ENCODE measurements at regions of chr1 and their contacts with region 1.

Region 1: DNA sequence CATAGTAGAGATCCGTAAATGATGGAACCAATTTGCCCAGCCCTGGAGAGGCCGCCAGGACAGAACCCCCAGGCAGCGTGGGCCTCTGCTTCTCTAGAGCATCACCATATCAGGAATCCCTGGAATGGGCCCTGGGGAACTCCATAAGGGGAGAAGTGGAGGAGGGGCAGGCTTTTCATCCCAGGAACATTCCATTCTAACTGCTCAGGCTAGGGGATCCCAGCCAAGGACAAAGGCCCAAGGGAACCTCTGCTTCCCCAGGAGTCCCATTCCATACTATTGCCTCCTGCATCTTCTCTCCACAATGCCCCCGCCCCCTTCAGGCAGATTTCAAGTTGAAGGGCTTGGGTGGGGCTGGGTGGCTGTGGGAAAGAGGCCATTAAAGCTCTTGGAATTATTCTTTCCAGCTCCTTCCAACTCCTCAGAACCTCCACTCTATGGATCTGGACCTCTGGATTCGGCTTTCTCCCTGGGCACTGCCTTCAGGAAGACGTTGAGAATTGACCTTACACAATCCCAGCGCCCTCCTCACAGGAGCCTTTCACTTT is 6.0 kb downstream of the TRNP1 start:
- DNase-seq: peak; percentile 98
- ATAC-seq: peak; percentile 70
- H3K4me3 ChIP-seq: no peak overlapping the region
- H3K27ac ChIP-seq: peak overlapping the region; percentile 88
- H3K4me1 ChIP-seq: peaks cover 51% of the 10 kb centered on the region
- H3K27me3 ChIP-seq: no peaks in the 10 kb centered on the region
- CTCF ChIP-seq: no peak
- POLR2A ChIP-seq: no peak; the same call in 1 of the 2 replicates
- RAD21 ChIP-seq: no peak; the same call in 1 of the 2 replicates

Region 2: DNA sequence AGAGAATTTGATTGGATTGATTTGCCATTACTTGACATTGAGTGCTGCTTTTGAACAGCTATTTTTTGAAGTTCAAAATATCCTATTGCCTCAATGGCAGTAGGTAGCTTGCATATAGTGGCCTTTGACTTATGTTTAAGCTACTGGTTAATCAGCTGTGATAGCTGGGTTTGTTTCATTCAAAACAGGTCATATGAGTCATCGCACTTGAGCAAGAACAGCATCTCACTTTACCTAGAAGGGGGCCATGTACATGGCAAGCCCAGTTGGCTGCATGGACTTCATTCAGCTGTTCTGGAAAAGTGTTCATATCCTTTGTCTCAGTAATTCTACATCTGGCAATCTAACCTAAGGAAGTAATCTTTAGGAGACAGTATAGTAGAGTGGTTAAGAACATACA is 332.7 kb before region 1 on chr1:
- CTCF ChIA-PET with region 1: no interaction called
- POLR2A ChIA-PET with region 1: no interaction called
- dilution Hi-C with region 1: no loop called
- in situ Hi-C with region 1: no loop called
- intact Hi-C with region 1: no loop called
- DNase-seq: peak; percentile 62
- ATAC-seq: peak; percentile 48
- H3K4me3 ChIP-seq: no peak overlapping the region
- H3K27ac ChIP-seq: no peak overlapping the region
- H3K4me1 ChIP-seq: peaks cover 2% of the 10 kb centered on the region; the same call in 1 of the 2 replicates
- H3K27me3 ChIP-seq: peaks cover 2% of the 10 kb centered on the region
- CTCF ChIP-seq: no peak
- POLR2A ChIP-seq: no peak
- RAD21 ChIP-seq: no peak

Region 3: DNA sequence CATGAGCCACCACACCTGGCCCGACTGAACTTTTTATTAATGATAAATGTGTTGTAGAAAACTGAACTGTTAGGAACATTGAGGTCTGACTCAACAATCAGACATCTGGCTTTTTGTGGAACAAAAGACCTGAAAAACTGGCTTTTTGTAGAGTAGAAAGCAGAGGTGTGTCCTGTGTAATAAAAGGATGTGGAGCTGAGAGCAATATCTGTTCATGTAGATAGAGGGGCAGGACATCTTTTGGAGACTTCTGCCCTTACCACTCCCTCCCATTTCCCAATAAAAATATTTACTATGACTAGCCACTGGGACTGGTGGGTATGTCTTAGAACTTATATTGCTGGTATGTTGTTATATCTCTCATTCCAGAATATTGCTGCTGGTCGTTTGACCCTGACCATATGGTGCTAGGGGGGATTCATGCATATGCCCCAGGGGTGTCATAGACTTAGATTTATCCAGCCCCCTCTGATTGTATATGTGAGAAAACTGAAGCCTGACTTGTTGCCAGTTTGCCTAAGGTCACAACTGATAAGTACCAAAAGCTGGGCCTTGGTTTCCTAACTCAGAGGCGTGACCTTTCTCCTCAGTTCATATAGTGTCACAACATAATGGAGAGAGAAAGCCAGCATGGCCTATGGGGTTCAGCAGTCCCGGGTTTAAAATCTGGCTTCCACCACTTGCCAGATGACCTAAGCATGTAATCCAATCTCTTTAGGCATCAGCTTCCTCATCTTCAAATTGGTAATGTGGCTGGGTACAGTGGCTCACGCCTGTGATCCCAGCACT is 245.2 kb before region 1 on chr1:
- CTCF ChIA-PET with region 1: no interaction called
- POLR2A ChIA-PET with region 1: no interaction called
- dilution Hi-C with region 1: no loop called
- in situ Hi-C with region 1: no loop called
- intact Hi-C with region 1: no loop called
- DNase-seq: no peak
- ATAC-seq: no peak; the same call in none of the 2 replicates
- H3K4me3 ChIP-seq: no peak overlapping the region
- H3K27ac ChIP-seq: no peak overlapping the region
- H3K4me1 ChIP-seq: peaks cover 3% of the 10 kb centered on the region
- H3K27me3 ChIP-seq: no peaks in the 10 kb centered on the region
- CTCF ChIP-seq: no peak
- POLR2A ChIP-seq: no peak
- RAD21 ChIP-seq: no peak

Region 4: DNA sequence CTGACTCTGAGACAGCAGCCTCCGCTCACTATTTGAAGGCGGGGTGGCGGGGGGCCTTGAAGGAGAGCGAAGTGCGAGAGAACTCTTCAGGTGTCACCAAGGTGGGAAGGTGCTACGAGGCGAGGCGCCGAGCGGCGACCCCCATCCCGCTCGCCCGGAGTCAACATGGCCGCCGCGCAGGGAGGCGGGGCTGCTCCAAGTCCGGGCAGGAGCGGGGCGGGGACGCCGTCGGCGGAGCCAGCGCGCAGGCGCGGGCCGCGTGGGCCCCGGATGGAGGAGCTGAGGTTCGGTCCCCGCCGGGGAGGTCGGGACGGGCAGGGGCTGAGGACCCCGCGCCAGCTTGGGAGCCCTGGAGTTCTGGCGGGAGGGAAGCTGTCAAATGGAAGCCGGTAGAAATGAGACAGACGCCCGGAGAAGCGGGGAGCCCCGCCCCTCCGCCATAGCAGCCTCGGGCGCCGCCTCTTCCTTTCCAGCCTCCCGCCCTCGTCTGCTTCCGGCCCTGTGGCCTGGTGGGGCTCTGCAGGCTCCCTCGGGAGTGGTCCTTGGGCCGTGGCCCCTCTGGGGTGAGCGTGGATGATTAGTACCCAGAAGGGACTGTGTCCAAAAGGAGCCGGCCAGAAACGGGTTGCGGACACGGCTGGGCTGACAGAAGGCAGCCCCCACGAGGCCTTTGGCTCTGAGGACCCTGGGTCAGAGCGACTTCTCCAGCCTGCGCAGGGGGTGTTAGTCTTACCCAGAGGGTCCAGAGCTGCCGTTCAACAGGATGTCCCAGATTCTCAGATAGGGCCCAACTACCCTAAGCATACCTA is 211.6 kb before region 1 on chr1 and contains the start of gene PIGV:
- CTCF ChIA-PET with region 1: no interaction called
- POLR2A ChIA-PET with region 1: no interaction called
- dilution Hi-C with region 1: no loop called
- in situ Hi-C with region 1: no loop called
- intact Hi-C with region 1: no loop called
- DNase-seq: peak; percentile 75
- ATAC-seq: peak; percentile 77
- H3K4me3 ChIP-seq: peak within 1 kb of the TSS; percentile 72
- H3K27ac ChIP-seq: peak within 1 kb of the TSS; percentile 95
- H3K4me1 ChIP-seq: peaks cover 31% of the 10 kb centered on the region
- H3K27me3 ChIP-seq: no peaks in the 10 kb centered on the region
- CTCF ChIP-seq: no peak
- POLR2A ChIP-seq: peak; percentile 66; the same call in 1 of the 2 replicates
- RAD21 ChIP-seq: 0 out of 2 replicates have a peak, but pooled peaks have one; percentile 4
- total RNA-seq, gene PIGV: 8.6 and 10.6 TPM in 2 replicates

Region 5: DNA sequence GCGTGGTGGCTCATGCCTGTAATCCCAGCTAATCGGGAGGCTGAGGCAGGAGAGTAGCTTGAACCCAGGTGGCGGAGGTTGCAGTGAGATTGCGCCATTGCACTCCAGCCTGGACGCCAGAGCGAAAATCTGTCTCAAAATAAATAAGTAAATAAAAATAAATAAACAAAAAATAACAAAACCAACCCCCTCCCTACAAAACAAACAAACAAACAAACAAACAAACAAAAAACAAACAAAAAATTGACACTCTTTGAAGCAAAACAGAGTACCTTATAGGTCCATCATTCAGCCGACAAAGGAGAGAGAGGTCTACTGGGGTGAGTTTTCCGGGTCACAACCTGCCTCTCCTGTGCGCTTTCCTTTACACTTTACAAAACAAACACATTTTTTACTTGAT is 33.9 kb before region 1 on chr1:
- CTCF ChIA-PET with region 1: interaction called, 5 read pairs
- POLR2A ChIA-PET with region 1: interaction called, 3 read pairs
- dilution Hi-C with region 1: no loop called
- in situ Hi-C with region 1: no loop called
- intact Hi-C with region 1: loop called (anchors 2 kb)
- DNase-seq: no peak
- ATAC-seq: no peak
- H3K4me3 ChIP-seq: no peak overlapping the region
- H3K27ac ChIP-seq: no peak overlapping the region
- H3K4me1 ChIP-seq: peaks cover 15% of the 10 kb centered on the region
- H3K27me3 ChIP-seq: no peaks in the 10 kb centered on the region
- CTCF ChIP-seq: no peak
- POLR2A ChIP-seq: no peak
- RAD21 ChIP-seq: no peak

Region 6: GRCh38 chr1:27097484-27097917 is 98.0 kb after region 1 on chr1:
- CTCF ChIA-PET with region 1: interaction called, 4 read pairs
- POLR2A ChIA-PET with region 1: interaction called, 6 read pairs
- dilution Hi-C with region 1: no loop called
- in situ Hi-C with region 1: loop called (anchors 5 kb)
- intact Hi-C with region 1: loop called (anchors 1 kb)
- DNase-seq: peak; percentile 66
- ATAC-seq: peak; percentile 75
- H3K4me3 ChIP-seq: no peak overlapping the region
- H3K27ac ChIP-seq: no peak overlapping the region
- H3K4me1 ChIP-seq: peaks cover 16% of the 10 kb centered on the region
- H3K27me3 ChIP-seq: no peaks in the 10 kb centered on the region
- CTCF ChIP-seq: peak; percentile 97
- POLR2A ChIP-seq: 0 out of 2 replicates have a peak, but pooled peaks have one; percentile 38
- RAD21 ChIP-seq: peak; percentile 93

Region 7: DNA sequence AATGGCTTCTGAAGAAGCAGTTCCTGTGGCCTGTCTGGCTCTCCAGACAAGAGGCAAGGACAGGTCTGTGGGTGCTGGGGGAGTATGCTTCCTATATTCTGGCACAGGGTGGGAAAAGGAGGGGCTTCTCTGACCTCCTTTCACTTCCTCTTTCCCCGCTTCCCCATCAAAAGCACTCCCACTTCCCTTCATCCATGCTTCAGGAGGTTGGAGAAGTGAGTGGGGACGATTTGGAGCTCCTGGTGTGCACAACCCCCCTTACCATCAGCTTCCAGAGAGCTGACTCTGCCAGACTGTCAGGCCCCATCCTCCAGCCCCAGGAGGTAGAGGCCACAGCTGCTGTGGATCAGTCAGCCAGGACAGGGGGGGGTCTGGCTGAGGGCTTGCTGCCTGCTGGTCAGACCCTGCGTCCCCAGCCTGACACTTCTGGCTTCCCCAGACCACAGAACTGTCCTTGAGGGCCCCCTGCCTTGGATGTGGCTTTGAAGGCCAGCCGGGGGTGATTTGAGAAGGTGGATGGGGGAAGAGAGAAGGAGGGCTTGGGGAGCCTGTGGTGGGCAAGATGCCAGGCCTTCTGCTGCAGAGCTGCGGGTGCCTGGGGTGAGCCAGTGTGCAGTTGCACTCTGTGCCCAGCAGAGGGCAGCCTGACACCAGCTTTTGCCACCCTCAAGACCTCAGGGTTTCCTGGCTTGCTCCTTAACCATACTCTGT is 301.0 kb after region 1 on chr1:
- CTCF ChIA-PET with region 1: no interaction called
- POLR2A ChIA-PET with region 1: interaction called, 10 read pairs
- dilution Hi-C with region 1: no loop called
- in situ Hi-C with region 1: no loop called
- intact Hi-C with region 1: no loop called
- DNase-seq: peak; percentile 93
- ATAC-seq: peak; percentile 76
- H3K4me3 ChIP-seq: no peak overlapping the region
- H3K27ac ChIP-seq: peak overlapping the region; percentile 95
- H3K4me1 ChIP-seq: peaks cover 27% of the 10 kb centered on the region
- H3K27me3 ChIP-seq: no peaks in the 10 kb centered on the region
- CTCF ChIP-seq: peak; percentile 98
- POLR2A ChIP-seq: peak; percentile 49; the same call in 1 of the 2 replicates
- RAD21 ChIP-seq: peak; percentile 98

Measured in IMR-90 (cell line).